ENCODE measurements at regions of chr6 and their contacts with region 1.

Region 1: GRCh38 chr6:13212096-13212495 is 116.2 kb downstream of the TBC1D7 start:
- DNase-seq: no peak
- ATAC-seq: no peak
- H3K4me3 ChIP-seq: no peak overlapping the region
- H3K27ac ChIP-seq: no peak overlapping the region
- H3K4me1 ChIP-seq: no peaks in the 10 kb centered on the region
- H3K27me3 ChIP-seq: peaks cover 30 to 43% of the 10 kb centered on the region in 2 experiments
- CTCF ChIP-seq: no peak
- EP300 ChIP-seq: no peak
- POLR2A ChIP-seq: no peak
- RAD21 ChIP-seq: no peak

Region 2: DNA sequence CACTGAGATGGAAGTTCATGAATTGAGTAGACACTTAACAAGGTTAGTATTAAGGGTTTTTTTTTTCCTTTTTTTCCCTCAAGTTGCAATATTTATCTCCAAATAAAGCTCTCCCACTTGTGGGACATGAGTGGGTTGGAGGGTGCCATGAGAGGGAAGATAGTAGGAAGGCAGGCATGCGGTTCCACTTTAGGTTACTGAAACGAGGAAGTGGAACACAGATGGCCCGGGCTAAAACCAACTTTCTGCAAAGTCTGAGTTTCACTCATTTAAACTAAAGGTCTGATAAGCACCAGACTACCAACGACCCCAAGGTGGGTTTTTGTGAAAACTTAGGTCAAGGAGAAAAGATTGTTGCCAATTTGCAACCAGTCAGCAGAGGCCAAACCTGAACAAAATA is 74.1 kb after region 1 on chr6:
- CTCF ChIA-PET with region 1: no interaction called
- POLR2A ChIA-PET with region 1: no interaction called
- in situ Hi-C with region 1: no loop called
- intact Hi-C with region 1: loop called (anchors 5 kb)
- DNase-seq: no peak
- ATAC-seq: no peak
- H3K4me3 ChIP-seq: no peak overlapping the region
- H3K27ac ChIP-seq: no peak overlapping the region
- H3K4me1 ChIP-seq: peaks cover 7 to 17% of the 10 kb centered on the region in 2 experiments; a peak in 4 of 5 replicates
- H3K27me3 ChIP-seq: no peaks in the 10 kb centered on the region
- CTCF ChIP-seq: no peak
- EP300 ChIP-seq: no peak
- POLR2A ChIP-seq: no peak
- RAD21 ChIP-seq: no peak

Region 3: GRCh38 chr6:14984519-14984853 is 1772.4 kb after region 1 on chr6:
- CTCF ChIA-PET with region 1: no interaction called
- POLR2A ChIA-PET with region 1: no interaction called
- in situ Hi-C with region 1: no loop called
- intact Hi-C with region 1: no loop called
- DNase-seq: peak in 1 of 4 experiments; percentile 37
- ATAC-seq: peak; percentile 50; the same call in 1 of the 3 replicates
- H3K4me3 ChIP-seq: no peak overlapping the region
- H3K27ac ChIP-seq: no peak overlapping the region
- H3K4me1 ChIP-seq: peaks cover 4 to 10% of the 10 kb centered on the region in 2 experiments; a peak in 4 of 5 replicates
- H3K27me3 ChIP-seq: no peaks in the 10 kb centered on the region
- CTCF ChIP-seq: no peak
- EP300 ChIP-seq: no peak
- POLR2A ChIP-seq: no peak
- RAD21 ChIP-seq: no peak